Posterior vena cava (tissue), 2 donors: ENCODE measurements at regions of chr10 and their contacts with region 1.

Region 1: GRCh38 chr10:90051474-90051873 is 350.1 kb downstream of the KIF20B start:
- DNase-seq: no peak

Region 2: DNA sequence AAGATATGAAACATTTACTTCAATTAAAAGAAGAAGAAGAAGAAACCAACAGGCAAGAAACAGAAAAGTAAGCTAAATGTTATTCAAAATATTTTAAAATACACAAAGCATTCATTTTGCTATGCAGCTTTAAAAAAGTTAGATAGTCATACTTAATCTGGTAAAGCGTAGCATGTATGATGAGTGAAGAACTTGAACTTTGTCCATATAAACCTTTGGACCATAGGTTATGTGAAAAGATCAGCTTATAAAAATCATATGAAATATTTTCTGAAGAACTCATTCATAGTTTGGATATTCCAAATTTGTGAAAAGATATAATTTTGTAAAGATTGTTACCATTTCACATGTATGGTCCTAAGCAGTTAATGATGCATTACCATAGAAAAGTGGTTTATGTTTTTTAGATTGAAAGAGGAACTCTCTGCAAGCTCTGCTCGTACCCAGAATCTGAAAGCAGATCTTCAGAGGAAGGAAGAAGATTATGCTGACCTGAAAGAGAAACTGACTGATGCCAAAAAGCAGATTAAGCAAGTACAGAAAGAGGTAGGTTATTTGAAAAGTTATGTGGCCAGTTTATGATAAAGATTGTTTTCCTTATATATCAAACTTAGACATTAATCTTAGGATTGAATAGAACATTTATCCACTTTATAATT is 312.8 kb before region 1 on chr10:
- intact Hi-C with region 1: loop called in 1 of 2 experiments (anchors 5 kb)
- DNase-seq: no peak

Region 3: GRCh38 chr10:89837150-89837888 is 214.2 kb before region 1 on chr10:
- intact Hi-C with region 1: loop called in 1 of 2 experiments (anchors 5 kb)
- DNase-seq: no peak

Region 4: DNA sequence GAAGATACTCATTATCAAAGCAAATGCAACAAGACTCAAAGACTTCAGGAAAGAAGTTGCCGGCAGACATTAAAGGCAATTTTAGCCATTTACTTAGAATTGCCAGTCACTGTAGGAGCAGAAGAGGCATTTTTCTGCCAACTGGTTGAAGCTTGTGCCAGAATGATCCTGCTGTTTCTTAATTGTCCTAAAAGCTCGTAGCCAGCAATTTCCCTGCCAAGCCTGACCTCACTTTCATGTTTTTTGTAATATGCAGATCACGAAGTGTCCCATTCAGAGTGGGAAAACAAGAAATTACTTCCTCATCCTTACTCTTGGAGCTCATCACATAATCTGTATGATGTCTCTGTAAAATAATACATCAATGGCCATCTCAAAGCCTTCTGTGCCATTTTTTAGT is 1000.4 kb after region 1 on chr10:
- intact Hi-C with region 1: no loop called
- DNase-seq: peak; percentile 85

Region 5: DNA sequence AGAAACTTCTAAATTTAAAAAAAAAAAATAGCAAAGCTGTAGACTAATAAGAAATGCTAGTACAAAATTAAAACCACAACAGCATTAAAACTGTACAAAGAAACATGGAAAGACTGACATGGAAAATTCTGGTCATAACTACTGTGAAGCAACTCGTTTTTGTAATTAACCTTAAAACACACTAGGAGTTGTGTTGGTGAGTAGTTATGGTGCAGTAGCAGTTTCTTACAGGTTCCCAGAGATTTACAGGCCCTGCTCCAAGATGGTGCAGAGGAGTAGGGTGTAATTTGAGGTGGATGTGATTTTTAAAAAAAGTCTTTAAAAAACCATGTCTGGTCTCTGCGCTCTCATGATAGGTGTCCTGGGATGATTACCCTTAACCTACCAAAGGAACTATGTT is 1777.8 kb after region 1 on chr10:
- intact Hi-C with region 1: no loop called
- DNase-seq: no peak